BJ (cell line): ENCODE measurements at regions of chr17 and their contacts with region 1.

Region 1: GRCh38 chr17:63406689-63407330 is 39.3 kb downstream of the CYB561 start:
- DNase-seq: peak; percentile 59
- H3K4me3 ChIP-seq: no peak overlapping the region
- H3K27me3 ChIP-seq: no peaks in the 10 kb centered on the region
- CTCF ChIP-seq: peak; percentile 80

Region 2: DNA sequence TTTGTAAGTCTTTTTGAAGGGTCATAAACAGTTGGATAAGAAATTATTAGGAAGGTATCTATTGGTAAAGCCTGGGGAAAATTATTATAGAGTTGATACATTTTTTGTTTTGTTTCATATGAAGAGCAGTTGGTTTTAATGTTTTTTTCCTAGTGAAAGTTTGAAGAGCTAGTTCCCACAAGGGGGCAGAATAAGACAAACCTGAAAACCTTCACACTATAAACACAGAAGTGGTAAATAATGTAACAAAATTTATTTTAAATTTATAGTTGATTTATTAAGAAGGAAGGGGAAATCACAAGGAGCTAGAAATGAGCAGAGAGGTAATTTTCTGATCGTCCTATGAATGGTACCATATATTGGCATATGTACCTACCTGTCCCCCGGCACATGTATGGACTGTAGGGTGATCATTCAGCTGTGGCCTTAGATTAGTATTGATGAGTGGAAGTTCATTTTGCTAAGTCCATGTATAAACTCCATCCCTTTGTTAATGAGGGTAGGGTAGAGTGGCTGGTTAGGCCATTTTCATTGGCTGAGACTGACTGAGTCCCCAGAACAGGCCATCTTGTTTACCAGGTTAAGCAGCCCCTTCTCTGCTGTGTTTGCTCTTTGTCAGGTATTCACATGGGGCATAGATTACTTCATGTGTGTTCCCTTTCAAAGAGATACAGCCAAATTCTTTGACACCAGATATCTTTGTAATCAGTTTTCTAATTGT is 324.4 kb before region 1 on chr17:
- CTCF ChIA-PET with region 1: interaction called, 54 read pairs
- POLR2A ChIA-PET with region 1: no interaction called
- DNase-seq: no peak
- H3K4me3 ChIP-seq: no peak overlapping the region
- H3K27me3 ChIP-seq: no peaks in the 10 kb centered on the region
- CTCF ChIP-seq: peak; percentile 46; the same call in 1 of the 2 replicates

Region 3: DNA sequence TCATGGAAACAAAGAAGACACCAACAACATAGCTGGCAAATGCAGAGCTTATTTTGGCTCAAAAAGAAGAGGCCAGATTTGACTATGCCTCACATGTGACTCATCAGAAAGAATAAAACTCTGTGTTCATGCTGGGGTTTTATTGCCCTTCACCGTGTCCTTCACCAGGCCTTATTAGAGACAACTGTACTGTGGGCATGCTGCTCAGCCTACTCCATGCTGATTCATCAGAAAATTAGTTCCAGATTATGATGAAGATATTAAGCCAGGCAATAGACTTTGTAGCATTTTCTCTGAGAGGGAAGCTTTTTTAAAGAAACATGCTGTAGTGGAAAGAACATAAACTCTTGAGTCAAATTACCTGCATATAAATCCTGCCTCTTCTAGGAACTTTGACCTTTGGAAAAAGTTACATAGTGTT is 50.5 kb before region 1 on chr17:
- CTCF ChIA-PET with region 1: interaction called, 18 read pairs
- POLR2A ChIA-PET with region 1: no interaction called
- DNase-seq: peak; percentile 96
- H3K4me3 ChIP-seq: no peak overlapping the region
- H3K27me3 ChIP-seq: no peaks in the 10 kb centered on the region
- CTCF ChIP-seq: no peak

Region 4: GRCh38 chr17:63364387-63364786 is 42.4 kb before region 1 on chr17:
- CTCF ChIA-PET with region 1: interaction called, 19 read pairs
- POLR2A ChIA-PET with region 1: no interaction called
- DNase-seq: no peak
- H3K4me3 ChIP-seq: no peak overlapping the region
- H3K27me3 ChIP-seq: no peaks in the 10 kb centered on the region
- CTCF ChIP-seq: no peak

Region 5: GRCh38 chr17:63381101-63381729 is 25.6 kb before region 1 on chr17:
- CTCF ChIA-PET with region 1: interaction called, 13 read pairs
- POLR2A ChIA-PET with region 1: no interaction called
- DNase-seq: peak; percentile 45
- H3K4me3 ChIP-seq: no peak overlapping the region
- H3K27me3 ChIP-seq: no peaks in the 10 kb centered on the region
- CTCF ChIP-seq: no peak

Region 6: DNA sequence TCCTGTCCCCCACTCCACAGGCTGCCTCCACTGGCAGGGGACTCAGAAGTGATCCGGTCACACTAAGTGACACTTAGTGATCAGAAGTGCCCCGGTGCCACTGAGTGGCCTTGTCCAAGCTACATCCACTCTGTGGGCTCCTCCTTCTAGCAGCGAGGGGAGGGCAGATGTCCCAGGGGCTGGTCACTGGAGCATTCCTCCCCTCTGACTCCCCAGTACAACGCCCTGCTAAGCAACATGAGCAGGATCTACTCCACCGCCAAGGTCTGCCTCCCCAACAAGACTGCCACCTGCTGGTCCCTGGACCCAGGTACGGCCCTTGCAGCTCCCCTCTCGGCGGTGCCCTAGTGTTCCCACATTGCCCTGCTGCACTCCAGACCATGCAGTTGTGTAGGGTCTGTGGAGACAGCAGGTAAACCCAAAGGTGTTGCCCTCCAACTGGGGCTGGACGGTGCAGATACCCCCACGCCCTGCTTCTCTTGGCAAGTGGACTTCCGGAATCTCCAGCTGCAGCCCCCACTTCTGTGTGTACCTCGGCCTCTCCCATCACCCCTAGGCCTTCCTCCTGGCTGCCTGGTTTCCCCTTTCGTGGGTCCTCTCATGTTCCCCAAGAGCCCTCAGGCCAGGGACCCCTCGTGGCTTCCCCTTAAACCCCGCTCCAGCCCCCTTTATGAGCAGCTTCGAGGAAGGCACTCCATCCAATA is 72.1 kb after region 1 on chr17:
- CTCF ChIA-PET with region 1: no interaction called
- POLR2A ChIA-PET with region 1: no interaction called
- DNase-seq: peak; percentile 63
- H3K4me3 ChIP-seq: no peak overlapping the region
- H3K27me3 ChIP-seq: no peaks in the 10 kb centered on the region; the same call in none of the 2 replicates
- CTCF ChIP-seq: peak; percentile 97